ENCODE measurements at regions of chr1 and their contacts with region 1.

Region 1: GRCh38 chr1:27809883-27810282 is 20.7 kb upstream of the PPP1R8 start:
- DNase-seq: no peak
- ATAC-seq: no peak
- H3K4me3 ChIP-seq: no peak overlapping the region
- H3K27ac ChIP-seq: no peak overlapping the region
- H3K4me1 ChIP-seq: no peaks in the 10 kb centered on the region
- H3K27me3 ChIP-seq: no peaks in the 10 kb centered on the region
- CTCF ChIP-seq: no peak

Region 2: GRCh38 chr1:28235755-28236655 is 426.1 kb after region 1 on chr1 and contains the start of gene ATP5IF1:
- CTCF ChIA-PET with region 1: no interaction called
- POLR2A ChIA-PET with region 1: no interaction called
- in situ Hi-C with region 1: no loop called
- intact Hi-C with region 1: no loop called
- DNase-seq: peak; percentile 96
- ATAC-seq: peak; percentile 95
- H3K4me3 ChIP-seq: peak within 1 kb of the TSS; percentile 92 to 94
- H3K27ac ChIP-seq: peak within 1 kb of the TSS; percentile 91
- H3K4me1 ChIP-seq: peaks cover 8% of the 10 kb centered on the region
- H3K27me3 ChIP-seq: no peaks in the 10 kb centered on the region
- CTCF ChIP-seq: no peak
- total RNA-seq, gene ATP5IF1: 94.5 TPM

Region 3: DNA sequence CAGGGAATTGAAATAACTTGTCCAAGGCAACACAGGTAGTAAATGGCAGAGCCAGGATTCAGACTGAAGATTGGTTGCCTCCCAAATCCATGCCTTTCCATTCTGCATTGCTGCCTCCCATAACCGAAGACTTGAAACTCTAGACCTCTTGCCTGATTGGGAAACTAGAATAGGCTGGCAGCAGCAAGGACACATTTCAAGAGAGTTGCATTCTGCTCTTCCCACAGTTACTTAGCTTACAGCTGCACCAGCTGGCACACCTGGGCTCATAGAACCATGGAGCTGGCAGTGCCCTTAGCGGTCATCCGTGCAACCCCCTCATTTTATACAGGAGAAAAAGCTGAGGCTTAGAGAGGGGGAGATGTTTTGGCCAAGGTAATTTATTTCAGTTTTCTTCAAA is 751.0 kb after region 1 on chr1:
- CTCF ChIA-PET with region 1: no interaction called
- POLR2A ChIA-PET with region 1: interaction called, 18 read pairs
- in situ Hi-C with region 1: no loop called
- intact Hi-C with region 1: no loop called
- DNase-seq: no peak
- ATAC-seq: 0 out of 2 replicates have a peak, but pooled peaks have one; percentile 26
- H3K4me3 ChIP-seq: no peak overlapping the region
- H3K27ac ChIP-seq: no peak overlapping the region
- H3K4me1 ChIP-seq: no peaks in the 10 kb centered on the region
- H3K27me3 ChIP-seq: no peaks in the 10 kb centered on the region
- CTCF ChIP-seq: no peak

Region 4: DNA sequence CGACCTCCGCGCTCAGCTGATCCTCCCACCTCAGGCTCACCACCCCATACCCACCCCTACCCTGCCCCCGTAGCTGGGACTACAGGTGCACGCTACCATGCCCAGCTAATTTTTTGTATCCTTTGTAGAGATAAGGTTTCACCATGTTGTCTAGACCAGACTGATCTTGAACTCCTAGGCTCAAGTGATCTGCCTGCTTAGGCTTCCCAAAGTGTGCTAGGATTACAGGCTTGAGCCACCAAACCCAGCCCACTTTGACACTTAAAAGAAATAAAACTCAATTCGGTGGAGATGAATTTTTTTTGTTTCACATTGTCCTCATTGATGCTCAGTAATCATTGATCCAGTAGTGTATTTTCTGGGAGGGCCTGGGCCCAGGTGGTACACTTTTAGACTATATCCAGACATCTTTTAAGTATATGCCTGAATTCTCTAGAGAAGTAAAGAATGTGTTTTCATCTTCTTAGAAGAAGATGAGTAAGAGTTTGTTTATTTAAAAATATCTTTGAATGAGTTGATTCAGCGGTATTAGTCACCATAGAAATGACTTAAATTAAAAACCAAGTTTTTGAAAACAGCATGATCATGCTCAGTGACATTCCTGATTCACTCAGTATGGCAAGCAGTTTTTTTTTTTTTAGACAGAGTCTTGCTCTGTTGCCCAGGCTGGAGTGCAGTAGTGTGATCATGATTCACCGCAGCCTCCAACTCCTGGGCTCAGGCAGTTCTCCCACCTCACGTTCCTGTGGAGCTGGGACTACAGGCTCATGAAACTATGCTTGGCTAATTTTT is 1162.3 kb after region 1 on chr1:
- CTCF ChIA-PET with region 1: no interaction called
- POLR2A ChIA-PET with region 1: no interaction called
- in situ Hi-C with region 1: no loop called
- intact Hi-C with region 1: no loop called
- DNase-seq: peak; percentile 65
- ATAC-seq: peak; percentile 78
- H3K4me3 ChIP-seq: no peak overlapping the region
- H3K27ac ChIP-seq: no peak overlapping the region
- H3K4me1 ChIP-seq: no peaks in the 10 kb centered on the region
- H3K27me3 ChIP-seq: no peaks in the 10 kb centered on the region
- CTCF ChIP-seq: no peak